ENCODE measurements at regions of chr2 and their contacts with region 1.

Region 1: DNA sequence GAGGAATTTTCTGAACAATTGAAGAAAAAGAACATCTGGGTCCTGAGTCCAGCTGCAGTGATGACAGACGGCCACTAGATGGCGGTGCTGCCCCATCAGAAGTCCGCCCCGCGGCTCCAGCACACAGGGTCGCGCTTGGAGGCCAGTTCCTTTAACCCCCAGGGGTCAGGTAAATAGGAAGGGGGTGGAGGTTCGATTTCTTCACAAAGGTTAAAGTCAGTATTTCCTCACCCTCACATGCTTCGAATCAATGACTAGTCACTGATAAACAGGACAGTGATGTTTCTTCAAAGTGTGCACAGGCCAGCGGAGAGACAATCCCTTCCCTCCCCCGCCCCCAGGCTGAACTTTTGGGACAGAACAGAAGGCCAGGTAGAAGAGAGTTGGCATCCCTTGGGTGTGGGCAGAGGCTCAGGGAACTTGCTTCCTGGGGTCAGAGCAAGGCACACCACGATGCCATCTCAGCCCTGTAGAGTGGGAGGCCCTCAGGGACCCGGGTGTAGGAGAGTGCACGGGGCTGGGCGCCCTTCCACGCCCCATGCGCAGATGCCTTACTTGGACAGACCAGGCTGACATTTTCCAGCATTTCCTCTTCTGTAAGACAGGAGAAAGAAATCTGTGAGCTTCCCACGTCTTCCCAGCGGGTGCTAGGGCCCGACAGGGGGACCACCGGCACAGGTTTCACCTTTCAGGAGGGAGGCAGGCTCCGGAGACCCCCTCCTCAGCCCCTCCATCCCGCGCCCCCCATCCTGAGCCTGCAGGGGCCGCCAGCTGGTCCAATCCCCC is 722 bp downstream of the APOB start:
- DNase-seq: peak; percentile 89 to 91
- H3K4me3 ChIP-seq: peak overlapping the region; percentile 82
- H3K4me3 Mint-ChIP-seq: peak overlapping the region; percentile 91
- H3K27ac Mint-ChIP-seq: peak overlapping the region; percentile 89
- H3K4me1 ChIP-seq: peaks cover 18% of the 10 kb centered on the region
- H3K4me1 Mint-ChIP-seq: peaks cover 22% of the 10 kb centered on the region
- H3K27me3 ChIP-seq: no peaks in the 10 kb centered on the region
- H3K27me3 Mint-ChIP-seq: no peaks in the 10 kb centered on the region
- CTCF ChIP-seq: peak; percentile 94 to 95

Region 2: DNA sequence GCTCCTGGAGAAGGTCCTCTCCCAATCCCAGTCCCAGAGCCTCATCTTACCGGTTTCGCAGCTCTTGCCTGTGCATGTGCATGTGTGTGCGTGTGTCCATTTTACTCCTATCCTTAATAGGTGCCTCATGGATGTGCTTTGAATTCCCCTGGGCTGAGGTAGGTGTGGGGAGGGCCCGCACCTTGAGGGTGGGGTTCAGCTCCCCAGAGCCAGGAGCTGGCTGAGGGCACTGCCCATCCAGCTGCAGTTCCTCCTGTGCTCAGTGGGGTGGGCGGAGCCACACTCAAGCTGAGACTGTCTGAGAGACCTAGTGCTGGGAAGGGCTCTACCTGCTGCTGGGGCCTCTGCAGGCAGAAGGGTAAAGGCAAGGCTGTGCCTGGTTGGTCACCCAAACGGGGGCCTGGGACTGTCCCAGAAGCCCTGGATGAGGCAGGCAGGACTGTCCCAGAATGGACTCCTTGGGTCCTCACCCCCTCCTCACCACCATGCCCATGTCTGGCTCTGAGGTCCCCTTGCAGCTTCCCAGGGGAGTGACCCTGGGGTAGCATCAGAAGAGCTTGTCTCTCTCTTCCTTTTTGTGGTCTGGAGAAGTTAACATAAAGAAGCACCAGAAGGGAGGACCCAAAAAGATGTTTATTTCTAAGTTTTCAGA is 367.3 kb before region 1 on chr2:
- CTCF ChIA-PET with region 1: no interaction called
- POLR2A ChIA-PET with region 1: no interaction called
- intact Hi-C with region 1: loop called (anchors 5 kb)
- DNase-seq: peak; percentile 79 to 80
- H3K4me3 ChIP-seq: no peak overlapping the region
- H3K4me3 Mint-ChIP-seq: peak overlapping the region; percentile 42
- H3K27ac Mint-ChIP-seq: peak overlapping the region; percentile 69
- H3K4me1 ChIP-seq: peaks cover 15% of the 10 kb centered on the region
- H3K4me1 Mint-ChIP-seq: peaks cover 25% of the 10 kb centered on the region
- H3K27me3 ChIP-seq: no peaks in the 10 kb centered on the region
- H3K27me3 Mint-ChIP-seq: no peaks in the 10 kb centered on the region
- CTCF ChIP-seq: peak in 1 of 2 experiments; percentile 32

Region 3: DNA sequence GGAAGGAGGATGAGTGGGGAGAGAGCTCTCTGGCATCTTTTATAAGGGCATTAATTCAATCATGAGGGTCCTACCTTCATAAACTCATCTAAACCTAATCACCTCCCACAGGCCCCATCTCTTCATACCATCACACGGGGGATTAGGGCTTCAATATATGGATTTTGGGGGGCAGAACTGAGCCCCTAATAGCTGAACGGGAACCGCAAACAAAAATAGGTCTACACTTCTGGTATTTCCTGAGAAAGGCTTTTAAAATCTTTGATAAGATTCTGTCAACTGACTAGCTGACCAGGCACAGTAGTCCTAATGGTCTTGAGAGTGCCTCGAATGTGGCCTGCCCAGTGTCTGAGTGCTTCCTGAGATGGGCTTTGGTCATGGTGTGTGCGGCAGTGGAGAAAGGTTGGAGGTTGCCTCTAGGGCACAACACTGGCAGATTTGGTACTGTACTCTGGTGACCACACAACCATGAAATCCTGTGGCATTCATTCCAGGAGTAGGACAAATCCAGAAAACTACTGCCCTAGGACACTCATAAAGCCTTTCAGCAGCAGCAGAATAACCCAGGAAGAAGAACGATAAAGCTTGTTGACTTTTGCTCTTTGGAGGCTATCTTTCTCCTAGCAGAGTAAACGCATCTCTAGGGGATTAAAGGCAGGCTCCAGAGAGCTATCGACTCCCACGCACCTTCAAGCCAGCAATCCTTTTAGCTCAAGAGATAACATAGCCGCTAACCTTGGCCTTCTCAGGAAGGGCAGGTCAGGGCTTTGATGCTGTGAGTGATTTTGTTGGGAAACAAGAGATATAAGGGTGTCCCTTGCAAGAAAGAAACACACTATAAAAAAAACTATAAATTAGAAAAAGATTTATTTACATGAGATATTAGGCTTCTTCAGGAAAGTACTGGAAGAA is 13.0 kb after region 1 on chr2:
- CTCF ChIA-PET with region 1: interaction called, 3 read pairs
- POLR2A ChIA-PET with region 1: no interaction called
- intact Hi-C with region 1: loop called (anchors 1 kb)
- DNase-seq: peak; percentile 62 to 77
- H3K4me3 ChIP-seq: no peak overlapping the region
- H3K4me3 Mint-ChIP-seq: no peak overlapping the region
- H3K27ac Mint-ChIP-seq: no peak overlapping the region
- H3K4me1 ChIP-seq: peaks cover 21% of the 10 kb centered on the region
- H3K4me1 Mint-ChIP-seq: peaks cover 7% of the 10 kb centered on the region
- H3K27me3 ChIP-seq: no peaks in the 10 kb centered on the region
- H3K27me3 Mint-ChIP-seq: no peaks in the 10 kb centered on the region
- CTCF ChIP-seq: no peak

Region 4: GRCh38 chr2:21118302-21118920 is 75.3 kb after region 1 on chr2:
- CTCF ChIA-PET with region 1: interaction called, 10 read pairs
- POLR2A ChIA-PET with region 1: no interaction called
- intact Hi-C with region 1: loop called (anchors 1 kb)
- DNase-seq: peak; percentile 60 to 66
- H3K4me3 ChIP-seq: no peak overlapping the region
- H3K4me3 Mint-ChIP-seq: no peak overlapping the region
- H3K27ac Mint-ChIP-seq: no peak overlapping the region
- H3K4me1 ChIP-seq: no peaks in the 10 kb centered on the region
- H3K4me1 Mint-ChIP-seq: peaks cover 6% of the 10 kb centered on the region
- H3K27me3 ChIP-seq: no peaks in the 10 kb centered on the region
- H3K27me3 Mint-ChIP-seq: no peaks in the 10 kb centered on the region
- CTCF ChIP-seq: peak; percentile 72 to 74

Region 5: DNA sequence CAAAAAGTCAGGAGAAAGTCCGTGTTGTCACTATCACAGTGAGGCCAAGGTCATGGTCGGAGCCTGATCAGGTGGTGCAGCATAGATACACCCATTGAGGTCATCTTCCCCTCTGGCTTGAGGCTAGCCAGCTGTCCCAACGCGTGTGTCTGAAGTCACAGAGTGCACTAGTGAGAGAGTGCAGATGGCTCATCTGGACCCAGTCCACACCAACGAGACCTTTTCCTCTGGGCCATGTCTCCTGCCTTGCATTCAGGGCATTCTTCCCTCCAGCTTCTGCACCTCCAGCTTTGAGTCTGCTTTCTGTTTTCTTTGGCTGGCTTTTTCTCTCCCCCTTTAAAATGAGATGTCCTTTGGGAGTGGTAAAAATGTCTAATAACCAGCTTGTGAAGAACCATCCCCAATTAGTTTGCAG is 227.6 kb after region 1 on chr2:
- CTCF ChIA-PET with region 1: no interaction called
- POLR2A ChIA-PET with region 1: no interaction called
- intact Hi-C with region 1: loop called (anchors 1 kb)
- DNase-seq: peak; percentile 25 to 44
- H3K4me3 ChIP-seq: no peak overlapping the region
- H3K4me3 Mint-ChIP-seq: peak overlapping the region; percentile 44
- H3K27ac Mint-ChIP-seq: peak overlapping the region; percentile 92
- H3K4me1 ChIP-seq: peaks cover 53% of the 10 kb centered on the region
- H3K4me1 Mint-ChIP-seq: peaks cover 63% of the 10 kb centered on the region
- H3K27me3 ChIP-seq: no peaks in the 10 kb centered on the region
- H3K27me3 Mint-ChIP-seq: no peaks in the 10 kb centered on the region
- CTCF ChIP-seq: no peak

Region 6: GRCh38 chr2:21395366-21395765 is 352.2 kb after region 1 on chr2:
- CTCF ChIA-PET with region 1: no interaction called
- POLR2A ChIA-PET with region 1: no interaction called
- intact Hi-C with region 1: loop called (anchors 5 kb)
- DNase-seq: peak; percentile 32 to 44
- H3K4me3 ChIP-seq: no peak overlapping the region
- H3K4me3 Mint-ChIP-seq: no peak overlapping the region
- H3K27ac Mint-ChIP-seq: no peak overlapping the region
- H3K4me1 ChIP-seq: no peaks in the 10 kb centered on the region
- H3K4me1 Mint-ChIP-seq: peaks cover 7% of the 10 kb centered on the region
- H3K27me3 ChIP-seq: no peaks in the 10 kb centered on the region
- H3K27me3 Mint-ChIP-seq: peaks cover 2% of the 10 kb centered on the region
- CTCF ChIP-seq: peak; percentile 43 to 65

Measured in Caco-2 (cell line).